Ascending aorta (tissue), 2 donors: ENCODE measurements at regions of chr16 and their contacts with region 1.

Region 1: DNA sequence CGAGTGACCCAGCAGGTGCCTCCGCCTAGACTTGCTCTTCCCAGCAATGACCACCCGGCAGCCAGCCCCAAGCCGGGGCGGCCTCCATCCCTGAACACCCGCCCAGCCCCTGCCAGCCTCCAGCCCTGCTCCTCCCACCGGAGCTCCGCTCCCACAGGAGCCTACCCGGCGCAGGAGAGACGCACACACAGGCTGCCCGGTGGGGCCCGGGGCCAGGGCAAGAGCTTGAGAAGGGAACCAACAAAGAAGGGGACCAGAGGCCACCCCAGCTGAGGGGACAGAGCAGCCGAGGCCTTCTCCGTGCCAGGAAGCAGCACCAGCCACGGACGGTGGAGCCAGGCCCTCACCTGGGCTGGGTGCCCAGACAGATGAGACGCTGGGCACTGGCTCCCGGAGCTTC is 13.8 kb downstream of the PKD1 start:
- DNase-seq: peak in 1 of 2 donors; percentile 78
- H3K4me3 ChIP-seq: peak overlapping the region; percentile 47 to 62
- H3K27ac ChIP-seq: peak overlapping the region; percentile 94 to 99
- H3K4me1 ChIP-seq: peaks cover 23 to 44% of the 10 kb centered on the region in 2 donors
- H3K27me3 ChIP-seq: no peaks in the 10 kb centered on the region
- CTCF ChIP-seq: no peak

Region 2: GRCh38 chr16:2142942-2143877 is 21.4 kb after region 1 on chr16:
- intact Hi-C with region 1: loop called (anchors 1 kb)
- DNase-seq: no peak
- H3K4me3 ChIP-seq: no peak overlapping the region
- H3K27ac ChIP-seq: no peak overlapping the region
- H3K4me1 ChIP-seq: peaks cover 0 to 1% of the 10 kb centered on the region in 2 donors
- H3K27me3 ChIP-seq: no peaks in the 10 kb centered on the region
- CTCF ChIP-seq: no peak